ENCODE measurements at regions of chr6 and their contacts with region 1.

Region 1: GRCh38 chr6:20061952-20062351 is 150.3 kb downstream of the MBOAT1 start:
- DNase-seq: no peak
- H3K4me3 ChIP-seq: no peak overlapping the region
- H3K27ac ChIP-seq: no peak overlapping the region
- H3K4me1 ChIP-seq: no peaks in the 10 kb centered on the region
- H3K27me3 ChIP-seq: no peaks in the 10 kb centered on the region
- CTCF ChIP-seq: no peak
- POLR2A ChIP-seq: no peak

Region 2: DNA sequence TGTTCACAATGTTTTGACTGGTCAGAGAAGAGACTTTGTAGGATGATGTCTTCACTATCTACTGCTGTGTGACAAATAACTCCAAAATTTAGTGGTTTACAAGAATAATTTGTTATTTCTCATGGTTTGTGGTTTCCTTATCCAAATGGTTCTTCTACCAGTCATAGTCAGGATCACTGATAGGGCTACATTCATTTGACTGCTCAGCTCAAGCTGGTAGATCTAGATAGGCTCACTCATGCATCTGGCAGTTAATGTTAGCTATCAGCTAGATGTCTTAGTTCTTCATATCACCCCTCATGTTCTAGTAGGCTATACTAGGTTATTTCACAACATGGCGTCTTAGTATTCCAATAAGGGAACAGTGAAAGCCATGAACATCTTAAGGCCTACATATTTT is 93.8 kb before region 1 on chr6:
- intact Hi-C with region 1: loop called (anchors 5 kb)
- DNase-seq: no peak
- H3K4me3 ChIP-seq: no peak overlapping the region
- H3K27ac ChIP-seq: no peak overlapping the region
- H3K4me1 ChIP-seq: no peaks in the 10 kb centered on the region
- H3K27me3 ChIP-seq: no peaks in the 10 kb centered on the region
- CTCF ChIP-seq: no peak
- POLR2A ChIP-seq: no peak